ENCODE measurements at regions of chr13 and their contacts with region 1.

Region 1: GRCh38 chr13:94362411-94362909 is 117.0 kb downstream of the DCT start:
- DNase-seq: peak; percentile 50
- H3K4me3 ChIP-seq: no peak overlapping the region
- H3K27ac ChIP-seq: no peak overlapping the region
- H3K4me1 ChIP-seq: peaks cover 0 to 2% (median 0%) of the 10 kb centered on the region in 4 donors
- H3K27me3 ChIP-seq: no peaks in the 10 kb centered on the region
- CTCF ChIP-seq: peak; percentile 83 to 90 (median 84)
- EP300 ChIP-seq: no peak
- POLR2A ChIP-seq: no peak

Region 2: GRCh38 chr13:93227878-93228642 is 1134.4 kb before region 1 on chr13:
- in situ Hi-C with region 1: loop called in 1 of 4 experiments (anchors 25 kb)
- intact Hi-C with region 1: no loop called
- DNase-seq: peak; percentile 32
- H3K4me3 ChIP-seq: peak overlapping the region; percentile 20 to 46 (median 40)
- H3K27ac ChIP-seq: peak overlapping the region; percentile 69 to 82 (median 80)
- H3K4me1 ChIP-seq: peaks cover 0 to 14% (median 5%) of the 10 kb centered on the region in 4 donors
- H3K27me3 ChIP-seq: peaks cover 47% of the 10 kb centered on the region
- CTCF ChIP-seq: peak in 3 of 5 experiments; percentile 24 to 45 (median 32)
- EP300 ChIP-seq: no peak
- POLR2A ChIP-seq: no peak

Region 3: GRCh38 chr13:94345374-94346195 is 16.9 kb before region 1 on chr13:
- in situ Hi-C with region 1: no loop called
- intact Hi-C with region 1: no loop called
- DNase-seq: no peak
- H3K4me3 ChIP-seq: no peak overlapping the region
- H3K27ac ChIP-seq: no peak overlapping the region
- H3K4me1 ChIP-seq: peaks cover 0 to 23% (median 6%) of the 10 kb centered on the region in 4 donors
- H3K27me3 ChIP-seq: no peaks in the 10 kb centered on the region
- CTCF ChIP-seq: no peak
- EP300 ChIP-seq: no peak
- POLR2A ChIP-seq: no peak